ENCODE measurements at regions of chr14 and their contacts with region 1.

Region 1: DNA sequence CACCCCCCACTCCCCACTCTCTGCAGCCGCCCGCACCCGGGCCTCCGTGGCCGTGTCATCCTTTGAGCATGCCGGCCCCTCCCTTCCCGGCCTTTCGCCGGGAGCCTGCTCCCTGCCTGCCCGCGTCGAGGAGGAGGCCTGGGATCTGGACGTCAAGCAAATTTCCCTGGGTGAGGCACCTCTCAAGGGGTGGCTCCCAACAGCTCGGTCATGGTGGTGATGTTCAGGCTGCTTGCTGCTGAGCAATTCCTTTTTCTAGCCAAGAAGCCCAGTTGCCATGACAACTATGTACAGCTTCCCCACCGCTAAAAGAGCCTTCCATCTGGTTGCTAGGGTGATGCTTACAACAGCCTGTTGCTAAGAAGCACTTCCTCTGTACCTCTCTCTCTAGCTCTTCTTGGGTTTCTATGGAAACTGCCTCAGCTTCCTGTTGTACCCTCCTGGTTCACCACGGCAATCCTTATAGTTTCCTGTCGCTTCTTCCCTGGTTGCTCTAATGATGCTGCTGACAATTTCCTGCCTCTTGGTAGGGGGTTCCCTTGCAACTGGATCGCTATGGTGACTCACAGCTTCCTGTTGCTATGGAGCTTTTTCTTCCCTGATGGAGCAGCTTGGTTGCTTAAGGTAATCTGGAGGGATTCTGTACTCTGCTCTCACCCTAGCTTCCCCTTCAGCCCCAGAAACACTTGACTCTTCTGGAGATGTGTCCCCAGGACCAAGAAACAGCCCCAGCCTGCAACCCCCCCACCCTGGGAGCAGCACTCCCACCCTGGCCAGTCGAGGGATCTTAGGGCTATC is 11.0 kb downstream of the ZNF219 start:
- DNase-seq: peak in 1 of 2 donors; percentile 90
- H3K4me3 ChIP-seq: no peak overlapping the region
- H3K27ac ChIP-seq: peak overlapping the region in 3 of 5 donors; percentile 4 to 67 (median 16)
- H3K4me1 ChIP-seq: peaks cover 7 to 54% (median 26%) of the 10 kb centered on the region in 4 donors
- H3K27me3 ChIP-seq: no peaks in the 10 kb centered on the region
- CTCF ChIP-seq: no peak
- EP300 ChIP-seq: no peak
- POLR2A ChIP-seq: no peak

Region 2: DNA sequence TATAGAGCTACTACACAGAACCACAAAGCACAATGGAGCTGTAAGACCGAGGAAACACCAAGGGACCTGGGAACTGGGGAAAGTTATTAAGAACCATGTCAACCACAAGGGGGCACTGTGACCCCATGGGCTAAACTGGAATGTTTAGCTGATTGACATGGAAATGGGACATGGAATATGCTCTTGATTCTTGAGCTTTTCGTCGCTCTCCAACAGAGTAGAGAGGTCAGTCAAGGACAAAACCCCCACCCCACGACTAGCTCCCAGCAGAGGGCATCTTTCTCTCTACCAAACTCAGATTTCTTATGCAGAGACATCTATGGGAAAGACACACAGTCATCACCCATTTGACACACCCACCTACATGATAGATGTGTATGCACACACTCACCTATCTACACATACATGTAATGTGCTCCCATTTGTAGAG is 72.7 kb before region 1 on chr14:
- intact Hi-C with region 1: loop called (anchors 10 kb)
- DNase-seq: peak; percentile 86 to 95
- H3K4me3 ChIP-seq: no peak overlapping the region
- H3K27ac ChIP-seq: no peak overlapping the region
- H3K4me1 ChIP-seq: peaks cover 0 to 11% (median 3%) of the 10 kb centered on the region in 4 donors
- H3K27me3 ChIP-seq: no peaks in the 10 kb centered on the region
- CTCF ChIP-seq: peak in 6 of 7 experiments; percentile 46 to 94 (median 86)
- EP300 ChIP-seq: no peak
- POLR2A ChIP-seq: no peak

Region 3: DNA sequence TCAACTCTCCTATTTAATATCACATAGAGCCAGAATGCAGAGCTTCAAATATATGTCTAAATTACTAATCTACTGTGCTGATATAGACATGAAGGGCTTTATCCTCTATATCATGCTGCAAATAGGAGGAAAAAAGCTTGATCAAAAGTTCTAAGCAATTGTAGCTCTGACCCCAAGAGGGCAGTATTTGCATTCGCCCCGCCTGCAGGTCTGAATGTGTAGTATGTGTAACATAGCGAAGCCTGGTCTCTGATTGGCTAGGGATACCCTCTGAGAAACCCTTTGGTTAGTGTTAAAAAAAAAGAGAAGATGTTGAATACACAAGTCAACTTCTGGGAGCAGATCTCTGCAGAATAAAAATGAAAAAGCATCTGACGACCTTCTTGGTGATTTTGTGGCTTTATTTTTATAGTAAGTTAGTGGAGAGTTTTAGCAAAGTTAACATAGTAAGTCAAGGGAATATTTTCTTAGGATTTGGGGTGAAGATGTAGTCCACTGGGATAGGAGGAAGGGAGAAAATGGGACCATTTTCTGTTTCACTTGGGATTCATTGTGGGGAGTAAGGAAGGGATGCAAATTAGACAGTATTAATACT is 737.8 kb after region 1 on chr14:
- intact Hi-C with region 1: no loop called
- DNase-seq: peak in 1 of 2 donors; percentile 30
- H3K4me3 ChIP-seq: no peak overlapping the region
- H3K27ac ChIP-seq: no peak overlapping the region
- H3K4me1 ChIP-seq: no peaks in the 10 kb centered on the region
- H3K27me3 ChIP-seq: peaks cover 0 to 23% (median 0%) of the 10 kb centered on the region in 3 donors
- CTCF ChIP-seq: peak in 1 of 7 experiments; percentile 18
- EP300 ChIP-seq: no peak
- POLR2A ChIP-seq: no peak

Measured in stomach (tissue), 19 donors.